Right lobe of liver (tissue), 6 donors: ENCODE measurements at regions of chr1 and their contacts with region 1.

Region 1: DNA sequence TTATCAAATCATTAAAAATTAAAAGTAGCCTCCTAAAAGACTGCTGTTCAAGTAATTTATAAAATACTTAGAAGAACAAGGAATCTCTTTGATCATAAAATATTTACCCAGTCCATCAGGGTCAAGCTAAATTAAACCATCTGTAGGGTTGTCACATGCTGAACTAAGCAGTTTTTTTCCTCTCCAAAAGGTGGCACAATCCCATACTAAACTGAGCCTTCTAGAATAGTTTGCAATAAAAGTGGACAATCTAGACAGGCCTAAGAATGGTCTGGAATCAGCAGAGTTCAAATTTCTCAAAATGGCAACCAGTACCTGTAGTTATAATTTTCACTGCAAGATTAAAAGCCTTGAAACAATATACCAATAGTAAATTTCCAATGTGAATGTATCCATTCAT is 194.8 kb downstream of the EIF4G3 start:
- DNase-seq: no peak
- ATAC-seq: peak; percentile 73 to 92 (median 87)
- H3K4me3 ChIP-seq: no peak overlapping the region
- H3K27ac ChIP-seq: peak overlapping the region in 1 of 3 donors; percentile 12
- H3K4me1 ChIP-seq: no peaks in the 10 kb centered on the region
- H3K27me3 ChIP-seq: no peaks in the 10 kb centered on the region
- CTCF ChIP-seq: peak; percentile 37 to 52 (median 46)
- POLR2A ChIP-seq: no peak

Region 2: GRCh38 chr1:21198929-21199328 is 217.0 kb after region 1 on chr1:
- intact Hi-C with region 1: loop called in 1 of 2 experiments (anchors 5 kb)
- DNase-seq: no peak
- ATAC-seq: no peak
- H3K4me3 ChIP-seq: no peak overlapping the region
- H3K27ac ChIP-seq: no peak overlapping the region
- H3K4me1 ChIP-seq: no peaks in the 10 kb centered on the region
- H3K27me3 ChIP-seq: no peaks in the 10 kb centered on the region
- CTCF ChIP-seq: no peak
- POLR2A ChIP-seq: no peak